Activated CD4-positive, alpha-beta T cell treated with anti-CD3 and anti-CD28 coated beads, Interleukin-2, amount 10 ng/mL, durations not matched to agents 24 days and 14 days (primary cell): ENCODE measurements at regions of chr14 and their contacts with region 1.

Region 1: DNA sequence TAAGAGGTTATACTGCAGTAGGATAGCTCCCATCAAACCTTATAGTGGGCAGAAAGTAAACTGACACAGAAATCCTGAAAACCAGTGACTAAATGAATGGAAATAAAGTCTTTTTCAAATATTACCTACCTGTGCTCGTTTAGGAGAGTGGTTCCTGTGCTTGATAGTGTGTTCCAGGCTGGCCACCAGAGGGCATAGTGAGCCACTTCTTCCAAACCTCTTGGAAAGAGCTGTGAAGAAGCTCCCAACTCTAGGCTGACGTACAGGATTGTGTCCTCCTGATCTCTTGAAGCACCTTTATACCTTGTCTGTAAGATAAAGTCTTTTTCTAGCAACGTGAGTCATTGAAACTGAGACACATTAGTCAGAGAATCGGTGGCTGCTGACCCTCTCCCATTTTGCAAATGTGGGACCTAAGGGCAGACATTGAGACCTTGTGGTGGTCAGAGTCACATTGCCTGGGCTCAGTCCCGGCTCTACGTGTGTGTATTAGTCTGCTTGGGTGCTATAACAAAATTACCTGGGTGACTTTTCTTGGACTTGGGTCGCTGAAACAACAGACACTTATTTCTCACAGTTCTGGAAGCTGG is 17.6 kb downstream of the TDP1 start:
- DNase-seq: peak; percentile 84
- H3K4me3 Mint-ChIP-seq: no peak overlapping the region
- H3K27ac Mint-ChIP-seq: no peak overlapping the region
- H3K4me1 Mint-ChIP-seq: peaks cover 4% of the 10 kb centered on the region
- H3K27me3 Mint-ChIP-seq: no peaks in the 10 kb centered on the region

Region 2: GRCh38 chr14:90235179-90235976 is 262.0 kb after region 1 on chr14:
- intact Hi-C with region 1: loop called (anchors 1 kb)
- DNase-seq: peak; percentile 91
- H3K4me3 Mint-ChIP-seq: no peak overlapping the region
- H3K27ac Mint-ChIP-seq: no peak overlapping the region
- H3K4me1 Mint-ChIP-seq: peaks cover 3% of the 10 kb centered on the region
- H3K27me3 Mint-ChIP-seq: peaks cover 11% of the 10 kb centered on the region